Cardiac septum (tissue), 1 donor: ENCODE measurements at regions of chr3 and their contacts with region 1.

Region 1: DNA sequence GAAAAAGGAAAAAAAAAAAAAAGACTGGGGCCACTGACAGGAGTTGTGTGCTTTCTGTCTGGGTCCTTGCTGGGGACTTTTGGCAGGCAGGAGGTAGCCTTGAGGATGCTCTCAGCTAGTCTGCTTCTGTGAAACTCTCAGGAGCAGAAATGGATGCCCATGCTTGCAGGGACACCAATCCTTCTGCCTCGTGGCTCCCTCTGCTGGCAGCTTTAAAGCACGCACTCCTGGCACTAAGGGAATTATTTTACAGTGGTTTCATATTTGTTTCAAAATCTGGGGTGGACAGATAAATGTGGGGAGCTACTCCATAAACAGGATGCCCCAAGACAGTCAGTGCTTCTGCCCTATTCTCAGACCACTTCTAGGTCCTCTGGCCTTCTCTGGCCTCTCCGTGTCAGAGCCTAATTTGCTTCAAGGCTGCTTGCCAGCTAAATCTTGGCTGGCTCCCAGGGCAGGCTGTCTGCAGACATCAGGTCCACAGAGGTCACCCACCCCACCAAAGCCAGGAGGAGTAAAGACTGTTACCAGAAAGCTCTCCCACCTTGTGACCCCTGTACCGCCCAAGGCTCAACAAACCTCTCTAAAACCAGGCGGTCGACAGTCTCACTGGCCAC is 17.1 kb downstream of the TRAIP start:
- DNase-seq: peak; percentile 88

Region 2: DNA sequence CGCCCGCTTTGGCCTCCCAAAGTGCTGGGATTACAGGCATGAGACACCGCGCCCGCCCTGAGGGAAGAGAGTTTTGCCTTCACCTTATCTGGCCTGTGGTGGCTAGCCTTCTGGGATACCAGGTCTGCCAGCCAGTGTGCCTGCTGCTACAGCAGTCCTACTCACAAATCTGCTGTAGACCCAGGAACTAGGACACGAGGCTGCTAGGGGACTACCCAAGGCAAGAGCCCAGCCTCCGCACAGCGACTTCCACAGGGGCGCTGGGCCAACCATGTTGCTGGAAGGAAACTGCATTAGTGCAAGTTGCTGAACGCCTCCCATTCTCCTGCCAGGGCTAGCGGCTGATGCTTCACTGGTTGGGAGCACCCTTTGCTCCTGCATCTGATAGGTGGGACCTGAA is 1982.6 kb before region 1 on chr3:
- intact Hi-C with region 1: no loop called
- DNase-seq: no peak

Region 3: DNA sequence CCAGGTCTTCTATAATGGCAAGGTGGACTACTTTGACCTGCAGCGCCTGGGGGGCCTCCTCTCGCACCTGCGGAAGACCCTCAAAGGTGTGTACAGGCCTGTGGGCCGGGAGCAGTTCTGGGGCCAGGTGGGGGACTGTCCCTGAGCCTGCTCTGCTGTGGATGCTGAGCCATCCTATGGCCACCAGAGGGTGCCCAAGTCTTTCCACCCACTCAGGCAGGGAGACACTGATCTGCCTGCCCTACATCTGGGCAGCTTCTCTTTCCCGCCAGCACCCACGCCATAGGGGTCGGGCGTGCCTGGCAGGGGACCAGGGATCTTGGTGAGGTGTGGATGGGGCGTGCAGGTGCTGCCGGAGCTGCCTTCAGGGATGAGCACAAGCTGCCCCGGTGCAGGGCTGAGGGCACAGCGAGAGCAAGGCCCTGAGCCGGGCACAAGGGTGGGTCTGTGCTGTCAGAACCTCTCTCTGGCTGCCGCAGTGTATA is 135.8 kb before region 1 on chr3:
- intact Hi-C with region 1: loop called (anchors 5 kb)
- DNase-seq: no peak

Region 4: DNA sequence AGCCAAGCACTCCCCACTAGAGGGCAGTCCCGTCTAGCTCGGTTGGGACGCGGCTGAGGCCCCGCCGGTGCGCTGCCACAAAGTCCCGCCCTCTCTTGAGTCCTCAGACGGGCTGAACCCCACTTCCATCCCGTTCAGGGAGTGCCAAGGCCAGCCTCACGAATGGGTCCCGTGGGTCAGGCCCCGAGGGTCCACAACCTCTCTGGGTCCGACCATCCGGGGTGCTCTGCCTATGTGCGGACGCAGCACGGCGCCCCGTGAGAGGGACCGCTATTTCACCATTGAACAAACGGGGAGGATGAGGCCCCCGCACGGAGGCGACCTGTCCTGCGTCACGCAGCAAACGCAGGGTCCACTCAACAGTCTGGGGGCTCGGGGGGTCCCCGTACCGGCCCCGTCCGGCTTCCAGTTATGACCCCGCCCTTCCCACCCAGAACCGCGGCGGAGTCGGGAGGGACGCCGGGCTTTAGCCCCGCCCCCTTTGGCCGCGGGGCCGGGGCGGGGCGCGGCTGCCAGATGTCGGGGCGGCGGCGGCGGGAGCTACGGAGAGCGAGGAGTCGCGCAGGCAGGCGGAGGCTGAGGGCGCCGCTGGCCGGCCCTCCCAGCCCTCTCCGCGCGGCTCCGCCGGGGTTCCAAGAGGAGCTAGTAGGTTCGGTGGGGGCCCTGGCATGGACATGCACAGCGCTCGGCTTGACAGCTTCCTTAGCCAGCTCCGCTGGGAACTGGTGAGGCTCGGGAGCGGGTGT is 36.4 kb before region 1 on chr3 and contains the start of gene INKA1:
- intact Hi-C with region 1: loop called (anchors 1 kb)
- DNase-seq: peak; percentile 97
- total RNA-seq, gene INKA1: 1.9 TPM

Region 5: DNA sequence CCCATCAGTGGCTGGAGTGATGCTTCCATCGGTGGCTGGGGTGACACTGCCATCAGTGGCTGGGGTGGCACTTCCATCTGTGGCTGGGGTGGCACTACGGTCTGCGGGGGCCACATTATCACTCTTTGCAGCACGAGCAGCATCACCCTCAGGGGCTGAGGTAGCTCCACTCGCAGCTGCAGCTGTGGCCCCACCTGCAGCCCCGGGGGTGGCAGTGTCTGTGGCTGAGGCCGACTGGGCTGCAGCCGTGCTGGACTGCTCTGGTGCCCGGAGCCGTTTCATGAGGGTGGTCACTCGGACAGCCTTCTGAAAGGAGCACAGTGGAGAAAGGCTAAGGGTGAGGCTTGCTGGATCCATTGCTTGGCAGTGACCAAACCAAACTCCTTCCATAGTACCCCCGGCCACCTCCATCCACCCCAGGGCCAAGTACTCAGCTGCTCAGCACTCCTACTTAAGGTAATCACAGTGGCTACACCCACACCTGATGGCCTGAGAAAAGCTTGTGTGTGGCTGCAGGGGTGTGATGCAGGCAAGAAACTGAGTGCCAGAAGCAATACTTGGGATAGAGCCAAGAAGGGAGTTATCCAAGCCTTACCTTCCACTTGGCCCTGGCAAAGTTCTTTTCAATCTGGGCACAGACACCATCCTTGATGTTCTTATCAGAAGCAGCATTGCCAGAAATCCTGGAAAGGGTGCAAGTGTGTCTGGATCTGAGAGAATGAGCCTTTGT is 20.4 kb after region 1 on chr3:
- intact Hi-C with region 1: loop called (anchors 2 kb)
- DNase-seq: no peak

Region 6: DNA sequence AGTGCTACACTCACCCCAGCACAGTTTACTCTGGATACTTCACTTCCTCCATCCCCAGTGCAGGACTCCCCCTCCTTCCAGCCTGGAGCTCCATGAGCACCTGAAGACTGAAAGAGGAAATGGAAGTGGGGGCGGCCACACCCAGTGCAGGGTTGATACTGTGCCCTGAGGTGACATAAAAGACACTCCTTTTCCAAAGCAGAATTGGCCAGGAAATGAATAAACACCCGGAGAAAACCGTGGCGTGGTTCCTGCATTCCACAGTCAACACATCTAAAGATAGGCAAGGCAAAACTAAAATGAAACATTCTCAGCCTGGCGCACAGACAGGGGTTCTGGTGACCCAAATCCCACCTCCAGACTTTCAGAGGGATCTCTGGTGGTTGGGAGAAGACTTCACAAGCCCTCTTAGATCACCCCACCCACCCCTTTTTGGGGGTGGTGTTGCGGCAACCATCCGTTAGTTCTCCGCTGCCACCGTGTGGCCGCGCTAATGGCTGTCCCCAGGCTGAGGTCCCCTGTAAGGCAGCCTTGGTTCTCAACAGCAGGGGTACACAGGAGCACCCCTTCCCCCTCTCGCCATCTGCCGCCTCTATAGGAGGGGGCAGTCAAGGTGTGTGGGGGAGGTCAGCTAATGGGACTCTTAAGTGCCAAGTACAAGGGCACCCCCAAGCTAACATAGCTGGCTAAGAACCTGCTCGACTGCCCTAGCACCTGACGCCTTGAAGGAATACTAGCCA is 66.9 kb after region 1 on chr3:
- intact Hi-C with region 1: loop called (anchors 5 kb)
- DNase-seq: no peak